ENCODE measurements at regions of chr9 and their contacts with region 1.

Region 1: GRCh38 chr9:86948074-86948929 is 996 bp upstream of the GAS1 start:
- DNase-seq: peak in 1 of 2 donors; percentile 87
- H3K4me3 ChIP-seq: peak overlapping the region; percentile 90 to 93
- H3K27ac ChIP-seq: peak overlapping the region; percentile 88 to 89
- H3K4me1 ChIP-seq: peaks cover 0 to 17% of the 10 kb centered on the region in 2 donors
- H3K27me3 ChIP-seq: no peaks in the 10 kb centered on the region
- CTCF ChIP-seq: peak; percentile 75 to 93 (median 92)

Region 2: DNA sequence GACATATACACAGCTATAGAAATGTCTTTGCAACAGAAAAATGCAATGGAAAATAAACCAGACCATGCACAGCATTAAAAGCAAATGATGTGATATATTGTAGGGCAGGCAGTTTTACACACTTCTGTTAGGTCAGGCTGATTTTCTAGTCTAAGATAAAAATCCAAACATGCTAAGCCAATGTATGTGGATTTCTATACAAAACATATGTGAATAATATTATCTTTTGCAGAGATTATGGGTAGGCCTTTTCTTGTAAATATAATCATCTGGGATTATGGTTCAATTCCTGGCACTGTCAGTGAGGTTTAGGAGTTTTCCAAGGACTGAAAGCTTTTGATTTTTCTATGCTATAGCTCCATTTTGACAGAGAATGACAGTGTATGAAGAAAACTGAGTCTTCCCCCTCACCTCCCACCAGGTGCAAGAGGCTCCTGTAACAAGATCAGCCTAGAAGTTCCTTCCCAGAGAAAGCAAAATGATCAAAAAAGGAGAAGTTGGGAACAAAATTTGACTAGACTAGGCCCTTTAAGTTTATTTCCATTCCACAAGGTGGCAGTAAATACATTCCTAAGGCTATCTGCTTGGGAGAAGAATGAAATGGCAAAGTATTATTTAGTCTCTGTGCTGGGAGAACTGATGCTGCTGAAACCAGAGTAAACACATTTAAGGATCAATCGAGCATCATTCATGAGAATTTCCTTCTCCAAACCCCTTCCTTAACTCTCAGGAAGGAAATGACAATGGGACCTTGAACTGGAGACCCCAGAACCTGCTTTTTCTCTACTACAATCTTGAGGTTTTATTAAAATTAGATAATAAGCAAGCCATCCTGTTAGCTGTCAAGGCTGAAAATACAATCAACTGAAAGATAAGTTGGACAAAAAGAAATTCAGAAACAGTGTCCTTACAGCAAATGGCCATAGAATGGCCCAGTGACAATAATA is 461.1 kb before region 1 on chr9:
- intact Hi-C with region 1: loop called (anchors 2 kb)
- DNase-seq: no peak
- H3K4me3 ChIP-seq: no peak overlapping the region
- H3K27ac ChIP-seq: no peak overlapping the region
- H3K4me1 ChIP-seq: no peaks in the 10 kb centered on the region
- H3K27me3 ChIP-seq: no peaks in the 10 kb centered on the region
- CTCF ChIP-seq: peak; percentile 48 to 72 (median 51)

Region 3: DNA sequence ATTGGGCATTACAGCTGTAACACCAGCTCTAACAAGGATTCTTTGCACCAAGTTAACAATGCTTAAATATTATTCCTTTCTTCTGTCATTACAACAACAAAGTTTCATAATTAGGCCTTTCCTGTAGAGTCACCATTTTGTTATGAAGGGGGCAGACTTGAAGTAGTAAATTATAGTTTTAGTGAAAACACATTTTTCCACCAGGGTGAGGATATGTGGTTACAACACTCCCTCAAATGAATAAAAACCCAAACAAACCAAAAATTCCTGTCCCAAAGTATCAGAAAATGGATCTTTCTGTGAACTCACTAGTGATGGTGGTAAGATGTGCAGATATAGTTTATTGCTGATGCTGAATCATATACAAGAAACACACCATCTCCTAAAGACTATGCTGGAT is 343.6 kb before region 1 on chr9:
- intact Hi-C with region 1: no loop called
- DNase-seq: no peak
- H3K4me3 ChIP-seq: no peak overlapping the region
- H3K27ac ChIP-seq: no peak overlapping the region
- H3K4me1 ChIP-seq: no peaks in the 10 kb centered on the region
- H3K27me3 ChIP-seq: no peaks in the 10 kb centered on the region
- CTCF ChIP-seq: no peak

Region 4: GRCh38 chr9:86893811-86894490 is 54.4 kb before region 1 on chr9:
- intact Hi-C with region 1: loop called (anchors 2 kb)
- DNase-seq: no peak
- H3K4me3 ChIP-seq: no peak overlapping the region
- H3K27ac ChIP-seq: no peak overlapping the region
- H3K4me1 ChIP-seq: no peaks in the 10 kb centered on the region
- H3K27me3 ChIP-seq: no peaks in the 10 kb centered on the region
- CTCF ChIP-seq: no peak

Region 5: DNA sequence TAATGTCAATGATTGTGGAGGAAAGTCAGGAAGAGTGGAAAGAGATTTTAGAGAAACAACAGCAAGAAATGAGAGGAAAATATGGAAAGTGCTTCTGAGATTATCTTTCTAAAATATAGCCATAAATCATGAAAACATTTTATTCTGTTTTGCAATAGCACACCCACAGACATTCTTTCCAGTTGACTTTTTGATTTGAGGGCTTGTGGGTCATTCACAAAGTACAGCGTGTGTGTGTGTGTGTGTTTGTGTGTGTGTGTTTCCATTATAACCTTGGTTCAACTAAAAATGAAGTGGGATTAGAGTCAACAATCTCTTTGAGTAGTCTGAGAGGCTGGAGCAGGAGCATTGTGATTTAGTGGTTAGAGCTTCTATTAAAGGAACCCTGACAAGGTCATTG is 115.6 kb after region 1 on chr9:
- intact Hi-C with region 1: loop called (anchors 5 kb)
- DNase-seq: peak in 1 of 2 donors; percentile 78
- H3K4me3 ChIP-seq: no peak overlapping the region
- H3K27ac ChIP-seq: peak overlapping the region; percentile 43 to 58
- H3K4me1 ChIP-seq: peaks cover 4 to 15% of the 10 kb centered on the region in 2 donors
- H3K27me3 ChIP-seq: no peaks in the 10 kb centered on the region
- CTCF ChIP-seq: no peak

Region 6: GRCh38 chr9:87148331-87149104 is 200.2 kb after region 1 on chr9:
- intact Hi-C with region 1: loop called (anchors 1 kb)
- DNase-seq: peak; percentile 49 to 95
- H3K4me3 ChIP-seq: peak overlapping the region; percentile 39 to 57
- H3K27ac ChIP-seq: peak overlapping the region; percentile 95 to 98
- H3K4me1 ChIP-seq: peaks cover 0 to 16% of the 10 kb centered on the region in 2 donors
- H3K27me3 ChIP-seq: no peaks in the 10 kb centered on the region
- CTCF ChIP-seq: peak in 1 of 3 experiments; percentile 40

Region 7: DNA sequence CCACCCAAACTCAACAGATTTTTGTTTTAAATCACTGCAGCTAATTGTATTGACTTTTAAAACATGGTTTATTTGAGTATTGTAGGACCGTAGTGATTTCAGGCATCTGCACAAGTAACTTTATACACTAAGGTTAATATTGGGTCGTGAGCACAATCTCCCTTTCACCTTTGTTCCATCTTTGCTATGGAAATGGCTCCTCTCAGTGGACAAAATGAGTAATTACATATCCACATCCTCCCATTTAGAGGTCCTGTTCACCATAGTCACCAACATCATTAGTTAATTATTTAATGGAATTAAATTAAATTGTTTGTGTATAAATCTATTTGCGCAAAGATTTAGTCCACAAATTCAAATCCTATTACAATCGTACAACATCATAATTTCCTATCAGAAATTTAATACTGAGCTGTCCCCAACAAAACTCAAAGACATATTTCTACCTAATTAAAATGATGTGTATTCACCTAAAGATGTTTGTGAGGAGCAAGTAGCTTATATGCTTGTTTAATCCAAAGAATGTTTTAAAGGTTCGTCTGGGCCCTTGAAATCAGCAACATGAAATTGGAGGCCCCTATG is 376.4 kb after region 1 on chr9:
- intact Hi-C with region 1: loop called (anchors 5 kb)
- DNase-seq: no peak
- H3K4me3 ChIP-seq: no peak overlapping the region
- H3K27ac ChIP-seq: no peak overlapping the region
- H3K4me1 ChIP-seq: no peaks in the 10 kb centered on the region
- H3K27me3 ChIP-seq: no peaks in the 10 kb centered on the region
- CTCF ChIP-seq: peak; percentile 74 to 79 (median 76)